Transverse colon (tissue), 4 donors: ENCODE measurements at regions of chr20 and their contacts with region 1.

Region 1: DNA sequence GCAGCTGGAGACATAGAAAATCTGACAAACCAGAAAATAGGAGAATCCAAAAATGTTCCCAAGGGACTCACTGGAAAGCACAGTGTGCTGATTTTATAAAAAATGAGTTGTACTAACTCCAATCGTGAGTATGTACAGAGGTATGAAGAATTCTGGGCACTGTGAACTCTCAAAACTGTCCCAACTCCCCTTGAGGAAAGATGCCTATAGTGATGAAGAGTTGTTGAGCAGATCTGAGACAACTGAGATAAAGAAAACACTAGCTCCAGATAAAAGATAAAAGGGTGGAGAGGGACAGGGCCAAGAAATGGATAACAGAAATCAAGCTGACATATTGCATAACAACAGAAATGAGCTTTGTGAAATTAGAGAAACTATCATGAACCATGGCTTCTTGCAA is 481.4 kb downstream of the MAFB start:
- DNase-seq: no peak
- H3K4me3 ChIP-seq: no peak overlapping the region
- H3K27ac ChIP-seq: no peak overlapping the region
- H3K4me1 ChIP-seq: no peaks in the 10 kb centered on the region
- H3K27me3 ChIP-seq: no peaks in the 10 kb centered on the region
- CTCF ChIP-seq: no peak
- EP300 ChIP-seq: no peak
- POLR2A ChIP-seq: no peak

Region 2: GRCh38 chr20:40265825-40266533 is 58.3 kb after region 1 on chr20:
- in situ Hi-C with region 1: loop called in 1 of 4 experiments (anchors 10 kb)
- intact Hi-C with region 1: no loop called
- DNase-seq: peak; percentile 35
- H3K4me3 ChIP-seq: no peak overlapping the region
- H3K27ac ChIP-seq: no peak overlapping the region
- H3K4me1 ChIP-seq: peaks cover 0 to 4% (median 0%) of the 10 kb centered on the region in 4 donors
- H3K27me3 ChIP-seq: no peaks in the 10 kb centered on the region
- CTCF ChIP-seq: peak in 4 of 5 experiments; percentile 31 to 44 (median 43)
- EP300 ChIP-seq: no peak
- POLR2A ChIP-seq: no peak

Region 3: DNA sequence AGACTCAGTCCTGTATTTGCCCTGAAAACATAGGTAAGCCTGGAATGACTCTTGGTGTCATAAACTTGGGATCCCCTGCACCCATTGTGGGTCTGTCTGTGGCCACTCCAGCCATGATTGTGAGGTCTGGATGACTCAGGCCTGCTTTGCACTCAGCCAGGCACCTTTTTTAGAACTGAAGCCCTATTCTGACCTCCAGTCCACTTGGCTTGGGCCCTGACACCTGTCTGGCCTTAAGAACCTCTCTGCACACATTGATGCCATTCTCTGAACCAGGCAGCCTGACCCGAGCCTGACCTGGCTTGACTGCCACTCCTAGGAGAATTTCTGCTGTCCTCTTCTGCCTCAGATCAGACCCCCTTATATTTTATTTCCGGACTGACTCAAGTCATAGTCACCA is 97.6 kb after region 1 on chr20:
- in situ Hi-C with region 1: no loop called
- intact Hi-C with region 1: no loop called
- DNase-seq: no peak
- H3K4me3 ChIP-seq: no peak overlapping the region
- H3K27ac ChIP-seq: no peak overlapping the region
- H3K4me1 ChIP-seq: no peaks in the 10 kb centered on the region
- H3K27me3 ChIP-seq: no peaks in the 10 kb centered on the region
- CTCF ChIP-seq: no peak
- EP300 ChIP-seq: no peak
- POLR2A ChIP-seq: no peak

Region 4: GRCh38 chr20:40781327-40782042 is 573.8 kb after region 1 on chr20:
- in situ Hi-C with region 1: no loop called
- intact Hi-C with region 1: no loop called
- DNase-seq: no peak
- H3K4me3 ChIP-seq: no peak overlapping the region
- H3K27ac ChIP-seq: no peak overlapping the region
- H3K4me1 ChIP-seq: no peaks in the 10 kb centered on the region
- H3K27me3 ChIP-seq: no peaks in the 10 kb centered on the region
- CTCF ChIP-seq: no peak
- EP300 ChIP-seq: no peak
- POLR2A ChIP-seq: no peak